Posterior vena cava (tissue), 2 donors: ENCODE measurements at regions of chr9 and their contacts with region 1.

Region 1: DNA sequence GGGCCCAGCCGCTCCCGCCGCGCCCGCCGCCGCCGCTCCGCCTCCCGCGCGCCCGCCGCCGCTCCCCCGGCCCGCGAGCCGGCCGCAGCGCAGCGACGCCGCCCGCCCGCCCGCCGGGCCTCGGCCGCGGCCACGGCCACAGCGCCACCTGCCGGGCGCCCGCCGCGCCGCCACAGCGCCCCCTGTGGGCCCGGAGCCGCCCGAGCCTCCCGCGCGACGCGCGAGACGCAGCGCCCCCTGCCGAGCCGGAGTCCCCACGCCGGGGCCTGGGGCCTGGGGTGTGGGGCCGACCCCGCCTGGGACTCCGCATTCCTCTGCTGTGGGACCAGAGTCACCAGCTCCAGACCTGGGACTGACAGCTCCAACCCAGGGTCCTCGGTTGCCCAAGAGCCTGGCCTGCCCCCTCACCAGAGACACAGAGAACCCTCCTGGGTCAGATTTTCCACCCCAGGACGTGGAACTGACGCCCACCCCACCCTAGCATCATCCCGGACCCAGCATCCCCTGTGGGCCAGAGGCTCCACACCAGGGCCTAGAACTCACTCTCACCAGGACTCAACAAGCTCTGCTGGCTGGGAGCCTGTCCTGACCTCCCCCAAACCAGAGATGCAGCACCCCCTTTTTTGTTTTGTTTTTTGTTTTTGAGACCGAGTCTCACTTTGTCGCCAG is at the start of gene RAPGEF1:
- DNase-seq: peak; percentile 94
- total RNA-seq, gene RAPGEF1: 74.5 to 90.8 TPM

Region 2: DNA sequence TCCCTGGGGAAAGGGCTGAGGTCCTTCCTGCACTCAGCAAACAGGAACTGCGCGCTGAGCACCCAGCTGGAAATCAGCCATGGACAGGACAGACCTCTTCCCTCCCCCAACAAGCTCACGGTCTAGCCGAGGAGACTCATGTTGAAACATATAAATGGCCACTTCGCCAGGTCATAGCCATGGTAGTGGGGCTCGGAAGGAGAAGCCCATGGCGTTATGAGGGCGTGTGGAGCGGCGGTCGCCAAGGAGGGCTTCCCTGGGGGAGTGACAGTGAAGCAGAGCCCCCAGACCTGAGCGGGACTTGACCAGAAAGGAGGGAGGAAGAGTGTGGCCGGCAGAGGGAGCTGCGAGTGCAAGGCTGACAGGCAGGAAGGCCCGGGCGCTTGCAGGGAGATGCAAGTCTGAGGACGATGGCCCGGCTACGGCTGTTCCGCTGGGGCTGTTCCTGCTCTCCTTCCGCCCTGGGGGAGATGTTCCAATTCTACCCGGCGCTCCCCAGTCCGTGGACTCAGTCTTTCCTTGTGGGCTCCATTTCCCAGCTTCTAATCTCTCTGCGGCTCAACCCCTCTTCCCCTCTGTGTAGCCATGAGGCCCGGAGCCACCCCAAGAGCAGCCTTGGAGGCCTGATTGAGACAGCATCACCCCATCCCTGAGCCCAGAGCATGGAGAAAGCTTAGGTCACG is 390.1 kb before region 1 on chr9:
- intact Hi-C with region 1: loop called in 1 of 2 experiments (anchors 10 kb)
- DNase-seq: peak; percentile 97

Region 3: DNA sequence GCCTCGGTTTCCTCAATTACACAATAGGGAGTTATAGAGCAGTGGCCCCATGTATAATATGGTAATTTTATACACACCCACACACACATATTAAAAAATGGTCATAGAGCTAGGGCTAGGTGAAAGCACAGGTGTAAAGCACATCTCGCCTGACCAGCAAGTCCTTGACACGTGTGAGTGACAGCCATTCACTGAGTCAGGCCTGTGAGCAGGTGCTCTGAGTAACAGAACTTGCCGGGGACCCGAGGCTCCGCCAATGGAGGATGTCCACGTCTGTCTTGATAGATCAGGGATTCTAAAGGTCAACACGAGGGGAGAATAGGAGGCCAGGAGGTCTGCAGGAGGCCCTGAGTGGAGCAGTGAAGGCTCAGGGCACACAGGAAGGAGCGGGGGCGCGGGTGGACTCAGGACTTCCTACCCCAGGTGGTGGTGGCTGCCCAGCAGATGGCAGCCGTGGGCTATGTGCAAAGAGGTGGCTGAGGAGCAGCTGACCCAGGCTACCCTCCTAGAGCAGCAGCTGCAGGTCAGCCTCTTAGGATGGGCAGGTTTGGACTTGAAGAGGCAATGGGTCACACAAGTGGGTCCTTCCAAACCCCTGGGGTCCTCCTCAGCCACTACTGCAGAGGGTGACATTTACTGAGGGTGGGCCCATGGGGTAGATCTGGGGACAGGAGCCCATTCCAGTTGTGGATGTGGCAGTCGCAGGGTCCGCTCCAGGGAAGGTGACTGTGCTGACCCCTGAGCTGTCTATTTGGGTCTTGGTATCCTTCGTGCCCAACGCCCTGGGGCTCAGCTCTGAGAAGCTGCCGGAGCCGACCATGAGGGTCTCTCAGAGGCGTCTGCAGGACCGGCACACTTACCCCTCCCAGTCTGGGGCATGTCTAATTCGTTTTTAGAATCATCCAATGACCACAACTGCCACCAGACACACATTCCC is 148.9 kb before region 1 on chr9:
- intact Hi-C with region 1: loop called (anchors 2 to 5 kb)
- DNase-seq: peak; percentile 95

Region 4: DNA sequence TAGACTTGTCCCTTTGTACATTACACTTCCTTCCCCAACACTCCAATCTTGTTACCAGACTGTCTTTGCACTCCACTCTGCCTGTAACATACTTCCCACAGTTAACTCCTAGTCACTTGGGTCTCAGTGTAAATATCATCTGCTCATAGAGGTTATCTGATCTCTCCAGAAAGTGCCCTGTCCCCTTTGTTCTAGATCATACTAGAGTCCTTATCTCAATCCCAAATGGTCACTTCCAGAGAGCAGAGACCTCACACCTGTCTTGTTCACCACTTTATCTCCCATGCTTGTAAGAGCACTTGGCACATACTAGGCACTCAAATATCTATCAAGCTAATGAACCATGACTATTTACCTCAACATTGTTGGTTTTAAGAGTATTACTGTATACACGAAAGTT is 584.3 kb after region 1 on chr9:
- intact Hi-C with region 1: no loop called
- DNase-seq: no peak